GM10248 (cell line): ENCODE measurements at regions of chr6 and their contacts with region 1.

Region 1: GRCh38 chr6:138685257-138685656 is 88.3 kb upstream of the CCDC28A start:
- DNase-seq: no peak
- CTCF ChIP-seq: no peak

Region 2: GRCh38 chr6:138673346-138674014 is 11.8 kb before region 1 on chr6:
- CTCF ChIA-PET with region 1: interaction called, 10 read pairs
- POLR2A ChIA-PET with region 1: no interaction called
- DNase-seq: no peak
- CTCF ChIP-seq: no peak

Region 3: DNA sequence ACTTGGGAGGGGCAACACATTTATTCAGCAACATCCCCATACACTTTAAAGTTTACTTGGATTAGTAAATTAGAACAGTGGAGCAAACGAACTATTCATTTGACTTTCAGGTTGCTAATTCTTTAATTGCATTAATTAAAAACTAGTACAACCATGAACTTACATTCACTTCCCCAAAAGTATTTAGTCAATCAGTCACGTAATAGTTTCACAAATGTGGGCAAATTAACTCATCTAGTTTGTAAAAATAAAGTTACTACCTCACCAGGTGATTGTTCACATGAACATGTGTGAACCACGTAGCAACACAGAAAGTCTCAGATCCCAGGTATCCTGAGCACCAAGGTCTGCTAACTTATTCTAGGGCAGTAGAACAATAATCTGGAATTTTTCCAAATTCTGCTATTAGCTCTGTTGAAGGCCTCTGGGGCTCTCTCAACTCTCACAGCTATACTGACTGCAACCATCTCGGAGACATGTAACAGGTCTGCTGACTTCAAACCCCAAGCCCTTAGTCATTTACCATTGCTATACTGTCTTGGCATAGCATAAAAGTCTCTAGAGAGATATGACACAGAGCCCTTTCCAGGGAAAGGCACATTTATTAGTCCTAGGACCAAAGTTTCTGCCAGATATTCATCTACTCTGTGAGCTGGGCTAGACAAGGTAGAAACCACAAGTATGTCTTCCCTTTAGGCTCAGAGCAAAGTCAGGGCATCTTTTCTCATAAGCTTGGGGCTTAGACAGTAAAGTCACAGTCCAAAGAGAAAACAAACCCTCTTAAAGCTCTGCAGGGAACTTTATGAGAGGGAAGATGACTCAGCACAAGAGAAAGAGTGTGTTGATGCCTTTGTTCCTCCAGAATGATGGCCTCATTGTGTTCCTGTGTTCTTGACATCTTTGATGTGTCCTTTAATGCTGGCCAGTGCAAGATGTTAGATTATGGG is 37.4 kb after region 1 on chr6:
- CTCF ChIA-PET with region 1: no interaction called
- POLR2A ChIA-PET with region 1: no interaction called
- DNase-seq: no peak
- CTCF ChIP-seq: no peak